ENCODE measurements at regions of chr19 and their contacts with region 1.

Region 1: GRCh38 chr19:35702223-35703012 is 1.9 kb upstream of the ZBTB32 start:
- DNase-seq: peak; percentile 91 to 98 (median 95)
- H3K4me3 ChIP-seq: peak overlapping the region in 2 of 4 donors; percentile 24 to 64
- H3K27ac ChIP-seq: no peak overlapping the region
- H3K4me1 ChIP-seq: peaks cover 0 to 9% of the 10 kb centered on the region in 2 donors
- H3K27me3 ChIP-seq: no peaks in the 10 kb centered on the region
- CTCF ChIP-seq: no peak
- POLR2A ChIP-seq: no peak

Region 2: DNA sequence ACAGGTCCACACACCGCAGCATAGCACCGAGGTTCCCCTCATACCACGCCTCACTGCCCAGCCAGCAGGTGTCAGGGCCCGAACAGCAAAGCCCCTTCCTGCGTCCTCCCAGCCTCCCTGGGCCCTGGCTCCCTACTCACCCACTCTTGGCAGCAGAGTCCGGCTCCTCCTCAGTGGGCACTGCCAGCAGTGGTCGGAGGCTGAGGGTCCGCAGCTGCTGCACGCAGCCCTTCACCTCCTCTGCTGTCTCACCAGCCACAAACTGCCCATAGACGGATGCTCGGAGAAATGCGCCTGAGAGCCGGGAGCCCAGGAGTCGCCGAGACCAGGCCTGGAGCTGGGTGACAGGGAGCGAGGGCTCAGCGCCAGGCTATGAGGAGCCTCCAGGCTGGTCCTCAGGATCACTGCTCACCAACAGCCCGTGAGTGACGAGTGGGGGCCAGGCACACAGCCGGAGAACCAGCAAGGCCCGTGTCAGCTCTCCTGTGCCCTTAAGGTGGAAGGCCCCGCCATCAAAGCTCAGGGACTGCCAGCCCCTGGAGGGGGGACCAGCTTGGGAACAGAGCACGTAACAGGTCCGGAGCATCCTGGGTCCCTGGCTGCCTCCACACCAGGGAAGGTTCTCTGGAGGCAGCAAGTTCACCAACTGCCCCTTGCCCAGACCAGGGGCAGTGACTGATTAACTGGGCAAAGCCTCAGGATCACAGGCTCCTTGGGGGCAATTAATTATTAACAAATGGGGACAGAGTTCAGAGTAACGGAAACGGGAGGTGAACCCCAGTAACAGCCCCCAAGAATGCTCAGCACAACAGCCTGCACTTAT is 110.0 kb after region 1 on chr19 and contains the start of gene PRODH2:
- intact Hi-C with region 1: loop called in 1 of 2 experiments (anchors 10 kb)
- DNase-seq: no peak
- H3K4me3 ChIP-seq: no peak within 1 kb of the TSS
- H3K27ac ChIP-seq: no peak within 1 kb of the TSS
- H3K4me1 ChIP-seq: no peaks in the 10 kb centered on the region
- H3K27me3 ChIP-seq: peaks cover 2% of the 10 kb centered on the region
- CTCF ChIP-seq: no peak
- POLR2A ChIP-seq: no peak
- total RNA-seq, gene PRODH2: 0.46 TPM in 1 of 9 donors, not detected in the others